ENCODE measurements at regions of chr19 and their contacts with region 1.

Region 1: DNA sequence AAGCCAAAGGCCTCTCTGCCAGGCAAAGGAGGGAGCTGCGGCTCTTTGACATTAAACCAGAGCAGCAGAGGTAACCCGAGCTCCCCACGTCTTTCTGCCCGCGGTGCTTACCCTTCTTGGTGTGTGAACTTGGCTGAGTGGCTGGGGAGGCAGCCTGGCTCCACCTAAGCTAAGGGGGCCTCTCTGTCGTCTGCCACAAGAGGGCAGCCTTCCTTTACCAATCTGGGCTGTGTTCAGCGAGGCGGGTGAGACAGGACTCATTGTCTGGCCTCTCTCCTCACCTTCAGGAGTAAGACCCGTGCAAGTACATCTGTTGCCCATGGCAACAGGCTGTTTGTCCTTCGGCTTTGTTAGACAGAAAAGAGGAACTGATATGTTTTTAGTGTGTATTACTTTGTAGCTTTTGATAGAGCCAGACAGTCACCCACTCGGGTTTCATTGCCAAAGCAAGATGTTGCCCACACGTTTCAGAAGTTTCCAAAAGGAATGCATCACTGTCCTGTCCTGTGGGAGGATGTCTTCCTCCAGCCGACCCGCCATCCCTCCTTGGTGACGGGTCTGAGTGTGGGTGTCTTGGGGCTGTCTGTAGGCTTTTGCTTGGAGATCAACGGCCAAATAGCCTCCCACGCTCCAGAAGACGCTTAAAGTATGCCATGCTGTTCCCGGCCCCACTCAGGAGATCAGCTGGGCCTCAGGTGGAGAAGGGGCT is 4.6 kb downstream of the POP4 start:
- DNase-seq: peak; percentile 80 to 87 (median 82)
- ATAC-seq: peak; percentile 71
- H3K4me3 ChIP-seq: no peak overlapping the region
- H3K27ac ChIP-seq: no peak overlapping the region
- H3K4me1 ChIP-seq: peaks cover 8% of the 10 kb centered on the region
- H3K27me3 ChIP-seq: no peaks in the 10 kb centered on the region
- CTCF ChIP-seq: peak; percentile 76 to 88 (median 80)
- POLR2A ChIP-seq: no peak

Region 2: GRCh38 chr19:29505097-29505824 is 105.5 kb before region 1 on chr19:
- intact Hi-C with region 1: no loop called
- DNase-seq: no peak
- ATAC-seq: no peak
- H3K4me3 ChIP-seq: no peak overlapping the region
- H3K27ac ChIP-seq: no peak overlapping the region
- H3K4me1 ChIP-seq: no peaks in the 10 kb centered on the region
- H3K27me3 ChIP-seq: no peaks in the 10 kb centered on the region
- CTCF ChIP-seq: no peak
- POLR2A ChIP-seq: no peak

Region 3: DNA sequence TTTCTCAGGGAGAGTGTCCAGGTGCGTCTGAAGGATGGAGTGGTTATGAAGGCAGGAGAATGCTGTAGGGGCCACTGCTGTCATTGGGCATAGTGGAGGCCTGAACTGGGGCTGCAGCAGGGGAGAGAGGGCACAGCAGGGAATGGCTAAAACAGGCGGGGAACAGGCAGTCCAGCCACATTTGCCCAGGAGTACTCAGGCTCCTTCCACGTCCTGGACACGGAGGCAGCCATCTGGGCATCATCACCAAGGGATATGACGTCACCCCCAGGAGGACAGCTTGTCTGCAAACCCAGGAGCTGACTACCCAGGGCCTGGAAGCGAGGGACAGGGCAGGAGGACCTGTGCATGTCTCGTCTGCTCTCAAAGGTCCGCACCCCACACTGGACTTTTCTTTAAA is 62.7 kb before region 1 on chr19:
- intact Hi-C with region 1: no loop called
- DNase-seq: no peak
- ATAC-seq: no peak
- H3K4me3 ChIP-seq: no peak overlapping the region
- H3K27ac ChIP-seq: no peak overlapping the region
- H3K4me1 ChIP-seq: no peaks in the 10 kb centered on the region
- H3K27me3 ChIP-seq: no peaks in the 10 kb centered on the region
- CTCF ChIP-seq: no peak
- POLR2A ChIP-seq: no peak

Region 4: GRCh38 chr19:29714953-29715700 is 104.4 kb after region 1 on chr19 and contains the start of gene C19orf12:
- intact Hi-C with region 1: loop called (anchors 5 kb)
- DNase-seq: peak; percentile 67 to 70 (median 68)
- ATAC-seq: peak; percentile 78
- H3K4me3 ChIP-seq: peak within 1 kb of the TSS; percentile 44 to 98
- H3K27ac ChIP-seq: peak within 1 kb of the TSS; percentile 72 to 95 (median 92)
- H3K4me1 ChIP-seq: peaks cover 42% of the 10 kb centered on the region
- H3K27me3 ChIP-seq: no peaks in the 10 kb centered on the region
- CTCF ChIP-seq: no peak
- POLR2A ChIP-seq: peak; percentile 73 to 87 (median 84)
- total RNA-seq, gene C19orf12: 18.2 to 23.7 TPM

Region 5: DNA sequence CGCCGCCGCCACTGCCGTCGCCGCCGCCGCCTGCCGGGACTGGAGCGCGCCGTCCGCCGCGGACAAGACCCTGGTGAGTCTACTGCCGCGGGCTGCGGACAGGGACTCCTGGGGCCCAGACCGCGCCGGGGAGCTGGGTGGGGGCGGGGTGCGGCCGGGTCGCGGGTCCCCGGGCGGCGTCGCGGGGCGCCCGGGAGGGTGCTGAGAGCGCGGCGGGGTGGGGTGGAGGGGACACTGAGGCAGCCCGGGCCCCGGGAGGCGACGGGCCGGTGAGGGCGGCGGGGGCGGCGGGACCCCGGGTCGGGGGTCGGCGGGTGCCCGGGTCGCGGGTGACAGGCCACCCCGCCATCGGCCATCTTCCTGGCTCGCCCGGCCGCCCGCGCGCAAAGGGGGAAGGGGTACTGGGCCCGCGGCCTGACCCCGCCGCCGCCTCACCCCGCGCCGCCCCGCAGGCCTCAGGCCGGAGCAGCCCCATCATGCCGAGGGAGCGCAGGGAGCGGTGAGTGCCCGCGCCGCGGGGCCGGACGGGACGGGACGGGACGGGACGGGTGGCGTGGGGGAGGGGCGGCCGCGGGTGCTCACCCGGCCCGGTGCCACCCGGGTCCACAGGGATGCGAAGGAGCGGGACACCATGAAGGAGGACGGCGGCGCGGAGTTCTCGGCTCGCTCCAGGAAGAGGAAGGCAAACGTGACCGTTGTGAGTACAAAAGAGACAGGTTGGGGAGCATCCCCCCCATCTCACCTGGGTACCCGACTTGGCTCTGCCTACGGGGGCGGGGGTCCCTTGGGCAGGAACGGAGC is 201.6 kb after region 1 on chr19:
- intact Hi-C with region 1: no loop called
- DNase-seq: peak in 3 of 4 donors; percentile 19 to 32 (median 21)
- ATAC-seq: no peak
- H3K4me3 ChIP-seq: no peak overlapping the region
- H3K27ac ChIP-seq: no peak overlapping the region
- H3K4me1 ChIP-seq: peaks cover 13% of the 10 kb centered on the region
- H3K27me3 ChIP-seq: no peaks in the 10 kb centered on the region
- CTCF ChIP-seq: no peak
- POLR2A ChIP-seq: no peak

Measured in body of pancreas (tissue), 4 donors.